ENCODE measurements at regions of chr6 and their contacts with region 1.

Region 1: DNA sequence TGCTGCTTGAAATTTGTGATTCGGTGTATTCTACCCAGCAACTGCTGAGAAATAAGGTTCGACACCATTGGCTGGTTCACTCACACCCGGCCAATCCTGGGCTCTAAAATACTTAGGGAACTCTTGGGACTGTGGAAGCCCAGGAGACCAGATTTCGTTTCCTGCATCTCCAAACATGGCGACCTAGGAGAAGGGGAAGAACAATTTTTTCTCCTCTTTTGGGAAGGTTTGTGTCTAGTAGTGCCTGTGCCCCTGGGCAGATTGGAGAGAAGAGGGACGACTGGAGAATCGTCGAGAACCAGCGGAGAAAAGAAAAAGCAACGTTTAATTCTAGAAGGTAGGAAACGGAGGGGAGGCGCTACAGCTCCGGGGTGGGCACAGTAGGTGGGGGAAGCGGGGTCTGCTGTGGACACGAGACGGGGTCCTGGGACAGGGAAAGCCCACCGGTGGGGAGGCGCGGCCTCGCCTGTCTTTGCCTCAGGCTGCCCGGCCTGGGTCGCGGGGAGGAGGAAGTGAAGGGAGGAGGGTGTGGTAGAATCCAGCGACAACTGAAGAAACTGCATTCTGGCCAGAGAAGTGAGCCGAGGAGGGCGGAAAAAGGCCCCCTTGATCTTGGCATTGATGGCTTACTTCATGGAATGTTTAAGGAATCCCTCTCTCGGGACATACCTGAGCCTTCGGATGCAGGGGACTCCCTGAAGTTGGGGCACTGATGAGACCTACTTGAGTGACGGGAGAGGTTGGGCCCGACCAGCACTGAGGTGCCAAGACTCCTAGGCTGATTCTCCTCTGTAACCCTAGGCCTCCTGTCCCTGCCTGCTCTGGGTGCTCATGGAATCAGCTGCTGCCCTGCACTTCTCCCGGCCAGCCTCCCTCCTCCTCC is at the start of gene BTN2A1:
- DNase-seq: peak; percentile 53 to 92
- H3K4me3 ChIP-seq: peak within 1 kb of the TSS; percentile 56 to 91
- H3K27ac ChIP-seq: peak within 1 kb of the TSS; percentile 82 to 96
- H3K4me1 ChIP-seq: peaks cover 14 to 37% of the 10 kb centered on the region in 2 donors
- H3K27me3 ChIP-seq: no peaks in the 10 kb centered on the region
- CTCF ChIP-seq: no peak
- total RNA-seq, gene BTN2A1: 8.3 TPM

Region 2: GRCh38 chr6:26363882-26364701 is 94.0 kb before region 1 on chr6:
- intact Hi-C with region 1: loop called (anchors 1 kb)
- DNase-seq: no peak
- H3K4me3 ChIP-seq: peak overlapping the region; percentile 72 to 79
- H3K27ac ChIP-seq: peak overlapping the region; percentile 64 to 83
- H3K4me1 ChIP-seq: peaks cover 0 to 8% of the 10 kb centered on the region in 2 donors
- H3K27me3 ChIP-seq: no peaks in the 10 kb centered on the region
- CTCF ChIP-seq: no peak

Region 3: GRCh38 chr6:26421259-26422144 is 36.5 kb before region 1 on chr6:
- intact Hi-C with region 1: loop called (anchors 2 kb)
- DNase-seq: peak; percentile 38 to 87
- H3K4me3 ChIP-seq: peak overlapping the region; percentile 52 to 97
- H3K27ac ChIP-seq: peak overlapping the region; percentile 75 to 95
- H3K4me1 ChIP-seq: peaks cover 5 to 35% of the 10 kb centered on the region in 2 donors
- H3K27me3 ChIP-seq: no peaks in the 10 kb centered on the region
- CTCF ChIP-seq: no peak

Region 4: GRCh38 chr6:26439657-26440056 is 18.4 kb before region 1 on chr6:
- intact Hi-C with region 1: loop called (anchors 2 kb)
- DNase-seq: no peak
- H3K4me3 ChIP-seq: peak overlapping the region; percentile 60 to 63
- H3K27ac ChIP-seq: peak overlapping the region in 1 of 2 donors; percentile 67
- H3K4me1 ChIP-seq: peaks cover 0 to 10% of the 10 kb centered on the region in 2 donors
- H3K27me3 ChIP-seq: no peaks in the 10 kb centered on the region
- CTCF ChIP-seq: no peak

Region 5: GRCh38 chr6:26473758-26474438 is 15.9 kb after region 1 on chr6:
- intact Hi-C with region 1: loop called (anchors 1 kb)
- DNase-seq: peak; percentile 68 to 92
- H3K4me3 ChIP-seq: peak overlapping the region; percentile 57 to 64
- H3K27ac ChIP-seq: peak overlapping the region; percentile 91
- H3K4me1 ChIP-seq: peaks cover 6 to 9% of the 10 kb centered on the region in 2 donors
- H3K27me3 ChIP-seq: no peaks in the 10 kb centered on the region
- CTCF ChIP-seq: no peak